ENCODE measurements at regions of chr12 and their contacts with region 1.

Region 1: GRCh38 chr12:57744777-57745484 is at the start of gene TSPAN31:
- DNase-seq: peak; percentile 95 to 99 (median 98)
- H3K4me3 ChIP-seq: peak within 1 kb of the TSS; percentile 67 to 100 (median 88)
- H3K27ac ChIP-seq: peak within 1 kb of the TSS; percentile 71 to 99 (median 95)
- H3K27me3 ChIP-seq: peaks cover 0 to 3% (median 0%) of the 10 kb centered on the region in 45 donors
- CTCF ChIP-seq: peak in 16 of 56 donors; percentile 5 to 40 (median 18)
- total RNA-seq, gene TSPAN31: 21.6 to 47.8 (median 33.9) TPM

Region 2: GRCh38 chr12:57632694-57633477 is 112.0 kb before region 1 on chr12 and contains the start of gene B4GALNT1:
- intact Hi-C with region 1: loop called in 1 of 2 experiments (anchors 5 kb)
- DNase-seq: peak in 6 of 10 donors; percentile 44 to 86 (median 70)
- H3K4me3 ChIP-seq: peak within 1 kb of the TSS; percentile 41 to 84 (median 71)
- H3K27ac ChIP-seq: peak within 1 kb of the TSS in 57 of 59 donors; percentile 34 to 92 (median 82)
- H3K27me3 ChIP-seq: peaks cover 0 to 10% (median 0%) of the 10 kb centered on the region in 45 donors
- CTCF ChIP-seq: peak; percentile 47 to 89 (median 76)
- total RNA-seq, gene B4GALNT1: 23.9 to 123 (median 85.1) TPM

Measured in dorsolateral prefrontal cortex (tissue), 120 donors.